Right ventricle myocardium superior (tissue), 1 donor: ENCODE measurements at regions of chr1 and their contacts with region 1.

Region 1: DNA sequence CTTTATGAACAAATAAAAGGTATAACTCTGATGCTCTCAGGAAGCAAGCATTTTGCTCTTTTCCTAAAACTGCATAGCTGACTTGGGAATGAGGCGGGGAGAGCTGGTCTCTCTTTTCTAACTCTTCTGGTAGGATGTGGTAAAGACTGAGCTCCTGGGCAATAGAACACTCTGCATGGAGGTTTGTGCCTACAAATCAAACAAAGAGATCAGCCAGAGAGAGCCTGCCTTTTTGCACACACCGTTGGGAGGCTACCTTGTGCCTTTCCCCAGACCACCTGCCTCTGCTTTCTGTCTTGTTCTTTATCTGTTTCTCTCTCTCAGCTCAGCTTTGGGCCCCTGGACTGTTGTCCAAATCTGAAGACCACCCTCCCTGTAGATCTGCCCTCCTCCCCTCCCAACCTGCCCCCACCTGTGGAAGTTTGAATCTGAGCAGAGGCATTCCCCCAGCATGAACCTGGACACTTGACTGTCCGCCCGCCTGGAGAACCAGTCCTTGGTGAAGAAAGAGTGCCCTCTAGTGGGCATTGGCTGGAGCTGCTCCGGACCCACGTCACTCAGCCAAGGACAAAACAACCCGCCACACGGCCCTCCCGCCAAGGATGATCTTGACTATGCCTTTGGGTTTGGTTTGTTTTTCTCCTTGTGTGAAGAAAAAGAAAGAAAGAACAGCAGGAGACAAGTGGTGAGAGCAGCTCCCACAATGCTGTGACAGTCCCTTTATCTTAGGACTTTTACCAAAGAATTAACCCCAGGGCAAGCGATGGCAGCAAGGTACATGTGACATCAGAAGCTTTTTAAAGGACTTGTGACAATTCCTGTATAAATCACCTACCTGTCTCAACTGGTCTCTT is 228.2 kb downstream of the PBX1 start:
- DNase-seq: peak; percentile 86
- ATAC-seq: peak; percentile 87

Region 2: GRCh38 chr1:164559342-164560051 is 227.7 kb before region 1 on chr1:
- intact Hi-C with region 1: loop called (anchors 5 kb)
- DNase-seq: peak; percentile 61
- ATAC-seq: peak; percentile 28

Region 3: GRCh38 chr1:164625001-164625617 is 162.1 kb before region 1 on chr1:
- intact Hi-C with region 1: loop called (anchors 10 kb)
- DNase-seq: no peak
- ATAC-seq: no peak

Region 4: DNA sequence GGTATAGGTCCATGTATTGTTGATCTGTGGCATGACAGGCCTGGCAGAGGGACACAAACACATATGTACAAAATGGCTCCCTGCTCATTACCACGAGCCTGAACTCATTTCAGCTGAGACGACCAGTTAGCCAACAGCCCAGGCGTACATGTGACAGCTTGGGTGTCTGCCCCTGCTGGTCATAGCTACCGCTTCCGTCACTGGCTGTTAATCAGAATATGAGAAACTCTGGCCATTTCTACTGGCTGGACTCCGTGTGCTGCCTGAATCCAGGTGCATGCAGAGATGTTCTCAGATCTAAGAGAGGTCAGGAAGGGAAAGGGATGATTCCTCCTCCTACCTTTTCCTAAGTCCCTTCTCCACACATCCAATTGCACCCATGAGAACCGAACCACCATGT is 83.7 kb before region 1 on chr1:
- intact Hi-C with region 1: no loop called
- DNase-seq: no peak
- ATAC-seq: no peak

Region 5: GRCh38 chr1:164716992-164717703 is 70.1 kb before region 1 on chr1:
- intact Hi-C with region 1: loop called (anchors 10 kb)
- DNase-seq: no peak
- ATAC-seq: no peak

Region 6: DNA sequence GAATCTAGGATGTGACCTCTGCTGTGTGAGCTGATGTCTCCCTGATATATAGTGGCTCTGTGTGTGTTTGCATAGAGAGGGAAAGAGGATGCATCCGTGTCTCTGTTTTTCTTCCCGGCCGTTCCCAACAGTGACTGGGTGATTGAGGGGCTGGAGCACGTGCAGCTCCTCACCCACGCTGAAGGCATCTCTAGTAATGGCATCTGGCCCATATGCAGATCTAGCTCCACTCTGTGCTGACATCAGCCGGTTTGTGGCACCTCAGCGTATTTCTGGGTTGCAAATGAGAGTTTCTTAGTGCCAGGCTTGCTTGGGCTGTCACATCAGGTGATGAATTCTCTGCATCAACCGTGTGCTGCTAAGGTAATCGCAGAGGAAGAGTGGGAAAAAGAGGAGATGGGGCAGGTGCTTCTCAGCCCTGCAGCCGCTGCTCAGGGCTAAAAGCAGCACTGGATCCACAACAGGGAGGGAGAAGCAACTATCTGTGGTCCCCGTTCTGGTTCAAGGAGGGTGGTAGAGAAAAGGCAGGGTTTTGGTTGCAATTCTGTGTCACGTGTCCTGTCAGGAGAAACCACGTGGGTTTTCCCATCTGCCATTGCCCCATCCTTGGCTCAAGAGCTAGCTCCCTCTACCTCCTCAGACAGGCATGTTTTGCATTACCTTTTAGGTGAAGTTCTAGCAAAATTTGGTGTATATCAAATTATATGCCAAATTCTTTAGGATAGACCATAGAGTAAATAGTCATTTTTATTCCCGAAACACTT is 54.7 kb after region 1 on chr1:
- intact Hi-C with region 1: no loop called
- DNase-seq: no peak
- ATAC-seq: peak; percentile 32

Region 7: GRCh38 chr1:164914208-164914607 is 127.0 kb after region 1 on chr1:
- intact Hi-C with region 1: loop called (anchors 10 kb)
- DNase-seq: no peak
- ATAC-seq: peak; percentile 72

Region 8: DNA sequence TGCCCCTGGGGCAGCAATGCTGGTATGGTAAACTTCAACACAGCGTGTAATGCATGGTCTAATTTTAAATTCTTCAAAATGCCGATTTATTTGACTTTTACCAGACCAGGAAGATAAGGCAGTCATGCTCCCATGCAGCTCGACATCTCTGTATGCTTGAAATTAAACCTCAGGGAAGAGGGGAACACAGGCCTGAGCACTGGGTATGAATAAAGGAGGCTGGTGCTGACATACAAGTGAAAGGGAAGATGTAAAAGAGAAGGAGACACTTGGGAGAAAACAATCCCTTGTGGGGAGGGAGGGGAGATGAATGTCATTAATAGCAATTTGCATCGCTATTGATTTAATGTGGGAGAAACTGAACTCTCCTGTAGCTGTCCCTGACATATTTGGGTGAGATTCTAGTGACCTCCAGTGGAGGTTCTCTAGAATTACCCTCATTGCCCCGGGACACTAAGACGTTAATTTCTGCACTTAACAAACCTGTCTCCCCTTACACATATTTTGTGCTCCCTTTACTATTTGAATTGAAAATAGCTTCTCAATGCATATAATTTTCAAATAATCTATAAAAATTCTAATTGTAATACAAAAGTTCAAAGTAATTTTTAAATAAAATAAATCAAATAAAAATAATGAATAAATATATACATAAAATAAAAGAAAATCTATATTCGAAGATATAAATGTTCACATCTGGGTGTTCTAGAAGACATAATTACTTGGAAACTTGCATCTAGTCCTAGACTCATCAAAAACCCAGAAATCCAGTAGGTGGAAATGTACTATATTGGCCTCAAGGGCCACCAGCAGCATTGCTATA is 286.2 kb after region 1 on chr1:
- intact Hi-C with region 1: loop called (anchors 10 kb)
- DNase-seq: no peak
- ATAC-seq: peak; percentile 79